Vagina (tissue), 2 donors: ENCODE measurements at regions of chr20 and their contacts with region 1.

Region 1: GRCh38 chr20:10660661-10661060 is 13.1 kb downstream of the JAG1 start:
- DNase-seq: no peak
- H3K4me3 ChIP-seq: no peak overlapping the region
- H3K27ac ChIP-seq: peak overlapping the region; percentile 97
- H3K4me1 ChIP-seq: peaks cover 99% of the 10 kb centered on the region
- H3K27me3 ChIP-seq: no peaks in the 10 kb centered on the region
- CTCF ChIP-seq: no peak
- POLR2A ChIP-seq: no peak

Region 2: DNA sequence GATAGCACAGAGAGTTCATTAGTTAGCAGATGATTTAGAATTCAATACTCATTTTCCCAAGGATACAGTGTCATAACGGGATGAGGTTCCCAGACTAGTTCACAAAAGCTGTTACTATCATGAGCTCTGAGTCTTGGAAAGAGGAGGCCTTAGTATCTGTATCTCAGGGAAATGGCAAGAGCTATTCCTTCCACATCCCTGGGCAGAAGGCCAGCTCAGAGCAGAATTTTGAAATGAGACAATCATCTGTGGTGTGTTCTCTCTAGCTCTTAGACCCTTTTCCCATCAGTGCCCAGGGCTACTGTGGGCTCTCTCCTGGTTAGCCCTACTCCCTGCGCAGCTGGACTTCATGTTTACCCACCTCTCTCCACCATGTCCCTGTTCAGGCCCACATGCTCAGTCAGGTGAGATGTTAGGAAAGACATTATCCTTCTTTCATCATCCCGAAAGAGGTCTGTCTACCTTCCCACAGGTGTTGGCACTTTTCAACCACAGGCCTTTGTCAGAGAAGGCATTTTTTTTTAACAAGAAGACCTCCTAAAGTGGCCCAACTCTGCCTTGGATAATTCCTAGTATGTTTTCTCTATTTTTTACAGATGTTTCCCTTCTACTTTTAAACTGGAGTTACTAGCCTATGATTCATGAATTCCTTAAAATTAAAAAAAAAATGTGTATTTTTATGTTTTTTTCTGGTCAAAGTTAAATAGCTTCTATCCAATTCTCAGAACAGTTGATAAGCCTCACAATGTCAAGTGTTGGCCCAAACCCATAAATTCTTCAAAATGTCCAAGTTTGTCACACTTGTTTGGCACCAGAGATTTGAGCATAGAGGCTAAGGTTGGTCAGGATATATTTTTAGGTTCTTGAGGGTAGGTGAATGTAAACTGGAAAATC is 51.1 kb before region 1 on chr20:
- intact Hi-C with region 1: loop called (anchors 5 kb)
- DNase-seq: no peak
- H3K4me3 ChIP-seq: no peak overlapping the region
- H3K27ac ChIP-seq: peak overlapping the region; percentile 76
- H3K4me1 ChIP-seq: peaks cover 19% of the 10 kb centered on the region
- H3K27me3 ChIP-seq: no peaks in the 10 kb centered on the region
- CTCF ChIP-seq: no peak
- POLR2A ChIP-seq: no peak